Prostate gland (tissue), 2 donors: ENCODE measurements at regions of chr20 and their contacts with region 1.

Region 1: DNA sequence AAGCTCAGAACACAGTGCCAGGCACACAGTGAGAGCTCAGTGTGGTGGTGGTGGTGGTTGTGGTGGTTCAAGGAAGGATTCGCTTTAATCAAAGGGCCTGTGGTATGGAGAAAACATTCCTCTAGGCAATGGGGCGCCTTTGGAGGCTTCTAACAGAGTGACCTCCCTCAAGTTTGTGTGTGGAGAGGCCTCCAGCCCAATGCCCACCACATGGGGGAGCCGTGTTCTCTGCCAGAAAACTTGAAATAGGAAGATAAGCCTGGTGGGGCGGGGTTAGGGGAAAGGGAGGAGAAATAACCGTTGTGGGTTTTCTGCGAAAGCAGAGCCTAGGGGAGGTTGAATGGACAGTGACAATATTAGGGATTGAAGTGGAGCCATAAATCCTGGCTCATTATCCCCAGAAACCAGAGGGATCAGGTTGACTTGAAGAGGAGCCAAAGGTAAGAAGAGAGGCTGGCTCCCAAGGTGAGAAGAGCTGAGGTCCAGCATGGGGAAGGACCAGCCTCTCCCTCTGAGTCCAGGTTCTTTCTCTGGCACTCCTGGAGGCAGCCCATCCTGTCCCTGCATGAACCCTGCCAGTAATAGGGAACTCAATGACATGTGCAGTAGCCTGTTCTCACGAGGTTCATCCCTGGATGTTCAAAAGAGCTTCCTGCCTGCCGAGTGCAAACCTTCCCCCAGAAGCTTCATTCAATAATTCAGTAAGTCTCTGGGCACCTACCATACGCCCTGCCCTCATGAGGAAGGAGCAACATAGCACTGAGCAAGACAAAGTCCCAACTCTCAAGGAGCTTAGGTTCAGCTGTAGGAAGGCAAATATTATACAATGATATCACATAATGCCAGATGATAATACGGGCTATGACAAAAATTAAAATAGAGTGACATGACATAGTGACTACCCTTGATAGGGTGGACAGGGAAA is 51.4 kb downstream of the TGM2 start:
- DNase-seq: no peak
- H3K4me3 ChIP-seq: no peak overlapping the region
- H3K27ac ChIP-seq: no peak overlapping the region
- H3K4me1 ChIP-seq: peaks cover 11% of the 10 kb centered on the region
- H3K27me3 ChIP-seq: no peaks in the 10 kb centered on the region
- CTCF ChIP-seq: no peak
- POLR2A ChIP-seq: no peak

Region 2: GRCh38 chr20:37552415-37552814 is 561.2 kb before region 1 on chr20:
- intact Hi-C with region 1: no loop called
- DNase-seq: no peak
- H3K4me3 ChIP-seq: no peak overlapping the region
- H3K27ac ChIP-seq: no peak overlapping the region
- H3K4me1 ChIP-seq: no peaks in the 10 kb centered on the region
- H3K27me3 ChIP-seq: no peaks in the 10 kb centered on the region
- CTCF ChIP-seq: no peak
- POLR2A ChIP-seq: no peak

Region 3: GRCh38 chr20:38033310-38034107 is 80.2 kb before region 1 on chr20 and contains the starts of genes RPRD1B and TTI1:
- intact Hi-C with region 1: no loop called
- DNase-seq: peak; percentile 88
- H3K4me3 ChIP-seq: peak within 1 kb of the TSS; percentile 77 to 85
- H3K27ac ChIP-seq: peak within 1 kb of the TSS; percentile 90 to 92
- H3K4me1 ChIP-seq: peaks cover 18% of the 10 kb centered on the region
- H3K27me3 ChIP-seq: no peaks in the 10 kb centered on the region
- CTCF ChIP-seq: peak in 1 of 4 experiments; percentile 30
- POLR2A ChIP-seq: peak; percentile 61
- total RNA-seq, gene RPRD1B: 21.9 to 27.5 TPM
- total RNA-seq, gene TTI1: 14.8 to 26.2 TPM

Region 4: DNA sequence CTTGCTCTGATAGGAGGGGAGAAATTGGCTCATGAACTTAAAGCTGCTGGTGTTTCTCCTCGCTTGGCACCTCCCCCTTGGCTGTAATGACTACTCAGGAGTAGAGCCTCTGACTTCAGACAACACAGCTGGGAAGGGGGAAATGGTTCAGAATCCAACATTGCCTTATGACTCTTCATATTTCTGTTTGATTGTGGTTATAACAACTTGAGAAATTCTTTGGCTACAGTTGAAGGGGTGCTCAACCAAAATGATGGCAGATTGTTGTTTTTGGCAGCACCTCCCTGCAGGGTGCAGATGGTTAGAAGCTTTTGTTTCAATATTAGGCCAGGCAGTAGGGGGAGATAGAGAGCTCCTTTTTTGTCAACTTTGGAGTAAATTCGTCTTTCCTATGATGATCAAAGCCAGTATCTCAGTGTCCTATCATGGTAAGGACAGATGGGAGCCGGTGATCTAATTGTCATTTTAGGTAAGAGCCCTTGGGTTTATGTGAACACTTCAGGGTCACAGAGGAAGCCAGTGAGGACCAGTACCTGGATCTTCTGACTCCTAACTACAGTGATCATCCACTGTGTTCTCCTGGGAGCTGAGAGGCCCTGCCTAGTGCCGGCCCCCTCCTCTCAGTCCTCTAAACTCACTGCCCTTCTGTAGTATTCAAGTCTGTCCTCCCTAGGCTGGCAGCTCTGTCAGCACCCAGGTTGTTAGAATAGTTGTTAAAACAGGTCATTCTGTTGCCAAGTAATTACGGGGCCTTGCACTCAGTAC is 40.2 kb before region 1 on chr20:
- intact Hi-C with region 1: loop called (anchors 5 kb)
- DNase-seq: peak; percentile 44
- H3K4me3 ChIP-seq: no peak overlapping the region
- H3K27ac ChIP-seq: peak overlapping the region; percentile 14 to 43
- H3K4me1 ChIP-seq: peaks cover 5% of the 10 kb centered on the region
- H3K27me3 ChIP-seq: no peaks in the 10 kb centered on the region
- CTCF ChIP-seq: peak; percentile 39 to 82 (median 76)
- POLR2A ChIP-seq: no peak

Region 5: GRCh38 chr20:38187512-38187911 is 73.8 kb after region 1 on chr20:
- intact Hi-C with region 1: no loop called
- DNase-seq: no peak
- H3K4me3 ChIP-seq: no peak overlapping the region
- H3K27ac ChIP-seq: no peak overlapping the region
- H3K4me1 ChIP-seq: no peaks in the 10 kb centered on the region
- H3K27me3 ChIP-seq: no peaks in the 10 kb centered on the region
- CTCF ChIP-seq: no peak
- POLR2A ChIP-seq: no peak

Region 6: GRCh38 chr20:38315290-38315966 is 201.8 kb after region 1 on chr20:
- intact Hi-C with region 1: no loop called
- DNase-seq: no peak
- H3K4me3 ChIP-seq: no peak overlapping the region
- H3K27ac ChIP-seq: no peak overlapping the region
- H3K4me1 ChIP-seq: no peaks in the 10 kb centered on the region
- H3K27me3 ChIP-seq: no peaks in the 10 kb centered on the region
- CTCF ChIP-seq: peak in 1 of 4 experiments; percentile 18
- POLR2A ChIP-seq: no peak